Heart left ventricle (tissue), 16 donors: ENCODE measurements at regions of chr7 and their contacts with region 1.

Region 1: GRCh38 chr7:122225874-122226273 is 78.7 kb downstream of the FEZF1 start:
- DNase-seq: no peak
- ATAC-seq: no peak
- H3K4me3 ChIP-seq: no peak overlapping the region
- H3K27ac ChIP-seq: no peak overlapping the region
- H3K4me1 ChIP-seq: no peaks in the 10 kb centered on the region
- H3K27me3 ChIP-seq: peaks cover 0 to 7% (median 0%) of the 10 kb centered on the region in 9 donors
- CTCF ChIP-seq: no peak
- POLR2A ChIP-seq: no peak

Region 2: GRCh38 chr7:122507591-122507990 is 281.7 kb after region 1 on chr7:
- intact Hi-C with region 1: loop called in 1 of 10 experiments (anchors 10 kb)
- DNase-seq: no peak
- ATAC-seq: no peak
- H3K4me3 ChIP-seq: no peak overlapping the region
- H3K27ac ChIP-seq: no peak overlapping the region
- H3K4me1 ChIP-seq: no peaks in the 10 kb centered on the region
- H3K27me3 ChIP-seq: no peaks in the 10 kb centered on the region
- CTCF ChIP-seq: no peak
- POLR2A ChIP-seq: no peak